ENCODE measurements at regions of chr10 and their contacts with region 1.

Region 1: GRCh38 chr10:99711129-99711719 is 20.7 kb downstream of the COX15 start:
- DNase-seq: peak in 6 of 9 donors; percentile 8 to 43 (median 34)
- ATAC-seq: peak; percentile 81
- H3K4me3 ChIP-seq: no peak overlapping the region
- H3K4me3 Mint-ChIP-seq: no peak overlapping the region
- H3K27ac ChIP-seq: no peak overlapping the region
- H3K27ac Mint-ChIP-seq: no peak overlapping the region
- H3K4me1 ChIP-seq: no peaks in the 10 kb centered on the region
- H3K4me1 Mint-ChIP-seq: no peaks in the 10 kb centered on the region
- H3K27me3 ChIP-seq: no peaks in the 10 kb centered on the region
- H3K27me3 Mint-ChIP-seq: no peaks in the 10 kb centered on the region

Region 2: DNA sequence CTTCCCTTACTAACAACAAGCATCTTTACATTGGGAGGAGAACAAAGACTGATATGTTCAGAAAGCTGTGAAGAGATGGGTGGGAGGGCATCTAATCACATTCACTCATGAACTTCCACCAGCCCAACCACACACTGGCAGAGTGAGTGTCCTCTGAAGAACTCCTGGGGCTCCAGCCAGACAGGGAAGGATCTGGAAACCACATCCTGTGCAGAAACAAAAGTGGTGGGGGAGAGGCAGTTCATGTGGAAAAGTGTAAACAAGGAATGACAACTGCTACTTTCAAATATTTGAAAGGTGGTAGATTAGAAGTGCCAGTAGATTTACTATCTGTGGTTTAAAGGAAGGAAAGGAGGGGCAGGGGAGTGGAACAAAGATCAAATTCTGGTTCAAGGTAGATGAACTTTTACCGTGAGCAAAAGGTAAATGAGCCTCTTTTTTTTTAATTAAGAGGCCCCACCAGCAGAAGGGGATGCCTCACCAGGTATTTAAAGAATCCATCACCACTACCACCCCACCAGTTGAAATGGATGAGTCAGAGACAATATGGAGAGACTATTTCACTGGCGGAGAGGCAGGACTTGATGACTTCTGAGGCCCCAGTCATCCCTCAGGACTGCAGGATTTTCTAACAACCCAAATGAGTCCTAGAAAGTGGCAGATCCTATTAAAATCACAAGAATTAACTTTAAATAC is 315.3 kb before region 1 on chr10:
- CTCF ChIA-PET with region 1: no interaction called
- POLR2A ChIA-PET with region 1: no interaction called
- intact Hi-C with region 1: loop called (anchors 1 to 2 kb)
- DNase-seq: no peak
- ATAC-seq: no peak
- H3K4me3 ChIP-seq: no peak overlapping the region
- H3K4me3 Mint-ChIP-seq: no peak overlapping the region
- H3K27ac ChIP-seq: peak overlapping the region; percentile 39
- H3K27ac Mint-ChIP-seq: peak overlapping the region in 7 of 9 donors; percentile 7 to 74 (median 60)
- H3K4me1 ChIP-seq: no peaks in the 10 kb centered on the region
- H3K4me1 Mint-ChIP-seq: peaks cover 0 to 15% (median 9%) of the 10 kb centered on the region in 7 donors
- H3K27me3 ChIP-seq: no peaks in the 10 kb centered on the region
- H3K27me3 Mint-ChIP-seq: no peaks in the 10 kb centered on the region

Region 3: DNA sequence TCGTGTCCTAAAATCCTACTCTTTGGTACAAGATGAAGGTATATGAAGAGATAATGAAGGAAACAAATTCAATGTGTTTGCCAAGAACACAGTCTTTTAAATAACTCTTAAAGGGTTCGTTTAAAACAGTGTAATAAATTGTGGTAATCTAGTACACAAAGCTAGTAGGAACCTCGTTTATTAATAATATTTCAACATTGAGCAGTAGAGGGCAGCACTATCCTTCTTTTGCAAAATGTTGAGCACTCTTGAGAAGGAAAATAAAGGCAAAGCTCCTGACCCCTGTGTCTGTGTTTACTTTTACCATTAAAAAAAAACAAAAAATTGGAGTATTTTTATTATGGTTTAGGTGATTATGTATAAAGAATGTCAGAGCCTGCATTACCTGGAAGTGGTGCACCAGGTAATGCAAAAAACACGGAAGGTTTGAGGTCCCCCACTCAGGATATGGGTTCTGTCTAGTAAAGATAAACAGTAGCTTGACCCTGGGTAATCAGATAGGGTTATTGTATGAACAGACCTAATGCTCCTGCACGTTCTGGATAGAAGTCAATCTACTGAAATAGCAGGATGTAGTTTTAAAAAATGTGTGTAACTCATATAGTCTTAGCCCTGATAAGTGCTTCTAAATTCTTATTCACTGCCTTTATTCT is 275.1 kb before region 1 on chr10:
- CTCF ChIA-PET with region 1: interaction called, 6 read pairs
- POLR2A ChIA-PET with region 1: no interaction called
- intact Hi-C with region 1: loop called (anchors 1 kb)
- DNase-seq: peak in 6 of 9 donors; percentile 11 to 51 (median 28)
- ATAC-seq: peak; percentile 73
- H3K4me3 ChIP-seq: no peak overlapping the region
- H3K4me3 Mint-ChIP-seq: no peak overlapping the region
- H3K27ac ChIP-seq: no peak overlapping the region
- H3K27ac Mint-ChIP-seq: peak overlapping the region in 1 of 9 donors; percentile 40
- H3K4me1 ChIP-seq: no peaks in the 10 kb centered on the region
- H3K4me1 Mint-ChIP-seq: peaks cover 13 to 37% (median 25%) of the 10 kb centered on the region in 7 donors
- H3K27me3 ChIP-seq: no peaks in the 10 kb centered on the region
- H3K27me3 Mint-ChIP-seq: no peaks in the 10 kb centered on the region

Region 4: GRCh38 chr10:99560277-99561126 is 150.7 kb before region 1 on chr10:
- CTCF ChIA-PET with region 1: interaction called, 7 read pairs
- POLR2A ChIA-PET with region 1: no interaction called
- intact Hi-C with region 1: loop called in 1 of 2 experiments (anchors 1 kb)
- DNase-seq: peak in 6 of 9 donors; percentile 9 to 35 (median 27)
- ATAC-seq: peak; percentile 41
- H3K4me3 ChIP-seq: no peak overlapping the region
- H3K4me3 Mint-ChIP-seq: no peak overlapping the region
- H3K27ac ChIP-seq: no peak overlapping the region
- H3K27ac Mint-ChIP-seq: peak overlapping the region in 1 of 9 donors; percentile 28
- H3K4me1 ChIP-seq: peaks cover 0 to 7% of the 10 kb centered on the region in 2 donors
- H3K4me1 Mint-ChIP-seq: peaks cover 0 to 8% (median 0%) of the 10 kb centered on the region in 7 donors
- H3K27me3 ChIP-seq: no peaks in the 10 kb centered on the region
- H3K27me3 Mint-ChIP-seq: peaks cover 15 to 36% (median 32%) of the 10 kb centered on the region in 5 donors

Region 5: GRCh38 chr10:99630439-99630838 is 80.8 kb before region 1 on chr10:
- CTCF ChIA-PET with region 1: no interaction called
- POLR2A ChIA-PET with region 1: no interaction called
- intact Hi-C with region 1: loop called (anchors 1 to 2 kb)
- DNase-seq: no peak
- ATAC-seq: peak; percentile 38
- H3K4me3 ChIP-seq: no peak overlapping the region
- H3K4me3 Mint-ChIP-seq: no peak overlapping the region
- H3K27ac ChIP-seq: no peak overlapping the region
- H3K27ac Mint-ChIP-seq: no peak overlapping the region
- H3K4me1 ChIP-seq: no peaks in the 10 kb centered on the region
- H3K4me1 Mint-ChIP-seq: no peaks in the 10 kb centered on the region
- H3K27me3 ChIP-seq: no peaks in the 10 kb centered on the region
- H3K27me3 Mint-ChIP-seq: peaks cover 23 to 32% (median 28%) of the 10 kb centered on the region in 5 donors

Measured in naive thymus-derived CD4-positive, alpha-beta T cell (primary cell).